ENCODE measurements at regions of chr7 and their contacts with region 1.

Region 1: DNA sequence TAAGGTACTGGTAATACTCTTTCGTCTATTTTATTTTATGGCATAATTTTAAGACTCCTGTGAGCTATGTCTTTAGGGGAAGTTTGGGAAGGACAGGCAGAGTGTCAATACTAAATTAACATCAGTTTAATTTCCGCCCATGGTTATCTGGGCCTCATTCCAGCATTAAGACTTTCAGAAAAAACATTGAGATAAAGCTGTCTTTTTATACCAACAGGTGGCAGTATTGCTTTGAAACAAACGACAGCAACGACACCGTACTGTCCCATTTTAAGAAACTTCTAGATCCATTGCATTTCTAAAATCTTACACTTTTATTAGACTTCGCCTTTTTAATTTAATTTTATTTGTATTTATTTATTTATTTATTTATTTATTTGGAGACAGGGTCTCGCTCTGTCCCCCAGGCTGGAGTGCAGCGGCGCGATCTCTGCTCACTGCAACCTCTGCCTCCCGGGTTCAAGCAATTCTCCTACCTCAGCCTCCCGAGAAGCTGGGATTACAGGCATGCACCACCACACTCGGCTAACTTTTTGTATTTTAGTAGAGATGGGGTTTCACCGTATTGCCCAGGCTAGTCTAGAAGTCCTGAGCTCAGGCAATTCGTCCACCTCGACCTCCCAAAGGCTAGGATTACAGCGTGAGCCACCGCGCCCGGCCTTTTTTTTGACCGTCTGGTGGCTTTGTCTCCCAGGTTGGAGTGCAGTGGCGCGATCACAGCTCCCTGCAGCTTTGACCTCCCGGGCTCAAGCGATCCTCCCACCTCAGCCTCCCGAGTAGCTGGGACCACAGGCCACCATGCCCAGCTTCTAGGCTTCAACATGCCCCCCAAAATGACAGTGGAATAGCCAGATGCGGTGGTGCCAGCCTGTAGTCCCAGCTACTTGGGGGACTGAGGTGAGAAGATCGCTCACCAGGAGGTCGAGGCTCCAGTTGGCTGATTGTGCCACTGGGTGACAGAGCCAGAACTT is 78.7 kb upstream of the C1GALT1 start:
- DNase-seq: peak; percentile 20
- H3K4me3 ChIP-seq: no peak overlapping the region
- H3K27ac ChIP-seq: no peak overlapping the region
- H3K27me3 ChIP-seq: no peaks in the 10 kb centered on the region
- CTCF ChIP-seq: peak; percentile 66

Region 2: DNA sequence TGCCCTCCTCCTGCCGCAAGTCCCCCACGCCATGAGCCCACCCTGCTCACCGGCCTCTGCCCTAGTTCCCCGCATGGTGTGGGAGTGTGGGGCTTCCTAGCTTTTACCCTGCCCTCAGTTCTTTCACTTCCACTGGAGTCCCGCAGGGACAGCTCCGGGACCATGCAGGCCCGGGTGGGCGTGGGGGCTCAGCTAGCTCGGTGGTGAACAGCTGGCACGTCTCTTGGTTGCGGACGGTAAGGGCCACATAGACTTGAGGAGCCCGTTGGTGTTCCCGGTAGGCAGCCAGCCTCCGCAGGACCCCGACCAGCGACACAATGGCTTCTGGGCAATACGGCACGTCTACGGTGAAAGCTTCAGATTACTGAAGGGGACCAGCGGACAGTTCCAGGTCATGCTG is 168.6 kb before region 1 on chr7:
- CTCF ChIA-PET with region 1: no interaction called
- POLR2A ChIA-PET with region 1: no interaction called
- DNase-seq: no peak
- H3K4me3 ChIP-seq: no peak overlapping the region
- H3K27ac ChIP-seq: no peak overlapping the region
- H3K27me3 ChIP-seq: no peaks in the 10 kb centered on the region
- CTCF ChIP-seq: no peak

Region 3: GRCh38 chr7:7002416-7003062 is 101.1 kb before region 1 on chr7:
- CTCF ChIA-PET with region 1: no interaction called
- POLR2A ChIA-PET with region 1: no interaction called
- DNase-seq: no peak
- H3K4me3 ChIP-seq: no peak overlapping the region
- H3K27ac ChIP-seq: no peak overlapping the region
- H3K27me3 ChIP-seq: no peaks in the 10 kb centered on the region
- CTCF ChIP-seq: no peak

Region 4: GRCh38 chr7:7060828-7061599 is 42.6 kb before region 1 on chr7:
- CTCF ChIA-PET with region 1: no interaction called
- POLR2A ChIA-PET with region 1: no interaction called
- DNase-seq: no peak
- H3K4me3 ChIP-seq: no peak overlapping the region
- H3K27ac ChIP-seq: no peak overlapping the region
- H3K27me3 ChIP-seq: no peaks in the 10 kb centered on the region
- CTCF ChIP-seq: no peak

Region 5: GRCh38 chr7:7114706-7115295 is 11.2 kb after region 1 on chr7:
- CTCF ChIA-PET with region 1: interaction called, 11 read pairs
- POLR2A ChIA-PET with region 1: no interaction called
- DNase-seq: no peak
- H3K4me3 ChIP-seq: no peak overlapping the region
- H3K27ac ChIP-seq: no peak overlapping the region
- H3K27me3 ChIP-seq: no peaks in the 10 kb centered on the region
- CTCF ChIP-seq: no peak

Region 6: GRCh38 chr7:7347045-7347444 is 243.4 kb after region 1 on chr7:
- CTCF ChIA-PET with region 1: interaction called, 10 read pairs
- POLR2A ChIA-PET with region 1: no interaction called
- DNase-seq: no peak
- H3K4me3 ChIP-seq: no peak overlapping the region
- H3K27ac ChIP-seq: no peak overlapping the region
- H3K27me3 ChIP-seq: no peaks in the 10 kb centered on the region
- CTCF ChIP-seq: no peak

Region 7: GRCh38 chr7:7424151-7424873 is 320.7 kb after region 1 on chr7:
- CTCF ChIA-PET with region 1: interaction called, 45 read pairs
- POLR2A ChIA-PET with region 1: no interaction called
- DNase-seq: no peak
- H3K4me3 ChIP-seq: peak overlapping the region; percentile 66
- H3K27ac ChIP-seq: no peak overlapping the region
- H3K27me3 ChIP-seq: no peaks in the 10 kb centered on the region
- CTCF ChIP-seq: peak; percentile 91

Region 8: DNA sequence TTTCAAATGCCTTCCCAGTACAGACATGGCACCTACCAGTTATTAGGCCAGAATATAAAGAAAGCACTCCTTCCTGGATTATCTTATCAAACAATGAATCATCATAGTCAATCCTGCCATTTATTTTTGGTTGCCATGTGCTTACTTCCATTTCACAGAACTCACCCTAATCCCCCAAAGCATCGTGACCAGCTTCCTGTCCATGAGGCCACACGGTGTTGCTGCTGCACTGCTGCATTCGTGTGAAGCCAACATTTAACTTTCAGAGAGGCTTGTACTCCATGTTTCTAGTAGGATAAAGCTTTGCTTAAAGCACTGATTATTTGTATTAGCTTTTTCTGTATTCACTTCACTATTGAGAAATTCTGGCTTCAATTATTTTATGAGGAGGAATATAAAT is 417.6 kb after region 1 on chr7:
- CTCF ChIA-PET with region 1: interaction called, 11 read pairs
- POLR2A ChIA-PET with region 1: no interaction called
- DNase-seq: no peak
- H3K4me3 ChIP-seq: no peak overlapping the region
- H3K27ac ChIP-seq: no peak overlapping the region
- H3K27me3 ChIP-seq: no peaks in the 10 kb centered on the region
- CTCF ChIP-seq: no peak

Measured in AG04450 (cell line).